Naive thymus-derived CD4-positive, alpha-beta T cell (primary cell): ENCODE measurements at regions of chr6 and their contacts with region 1.

Region 1: GRCh38 chr6:53189554-53189953 is 40.9 kb upstream of the GCM1 start:
- DNase-seq: no peak
- ATAC-seq: no peak
- H3K4me3 ChIP-seq: no peak overlapping the region
- H3K4me3 Mint-ChIP-seq: no peak overlapping the region
- H3K27ac ChIP-seq: no peak overlapping the region
- H3K27ac Mint-ChIP-seq: no peak overlapping the region
- H3K4me1 ChIP-seq: peaks cover 12 to 26% of the 10 kb centered on the region in 2 donors
- H3K4me1 Mint-ChIP-seq: peaks cover 8 to 39% (median 29%) of the 10 kb centered on the region in 7 donors
- H3K27me3 ChIP-seq: no peaks in the 10 kb centered on the region
- H3K27me3 Mint-ChIP-seq: peaks cover 0 to 2% (median 0%) of the 10 kb centered on the region in 5 donors

Region 2: GRCh38 chr6:53244958-53245357 is 55.4 kb after region 1 on chr6:
- CTCF ChIA-PET with region 1: no interaction called
- POLR2A ChIA-PET with region 1: no interaction called
- intact Hi-C with region 1: loop called (anchors 1 to 5 kb)
- DNase-seq: no peak
- ATAC-seq: peak; percentile 81
- H3K4me3 ChIP-seq: no peak overlapping the region
- H3K4me3 Mint-ChIP-seq: no peak overlapping the region
- H3K27ac ChIP-seq: no peak overlapping the region
- H3K27ac Mint-ChIP-seq: peak overlapping the region in 1 of 9 donors; percentile 30
- H3K4me1 ChIP-seq: peaks cover 0 to 17% of the 10 kb centered on the region in 2 donors
- H3K4me1 Mint-ChIP-seq: peaks cover 16 to 44% (median 30%) of the 10 kb centered on the region in 7 donors
- H3K27me3 ChIP-seq: no peaks in the 10 kb centered on the region
- H3K27me3 Mint-ChIP-seq: no peaks in the 10 kb centered on the region

Region 3: GRCh38 chr6:53250176-53251032 is 60.9 kb after region 1 on chr6:
- CTCF ChIA-PET with region 1: no interaction called
- POLR2A ChIA-PET with region 1: no interaction called
- intact Hi-C with region 1: loop called in 1 of 2 experiments (anchors 5 kb)
- DNase-seq: no peak
- ATAC-seq: peak; percentile 34
- H3K4me3 ChIP-seq: no peak overlapping the region
- H3K4me3 Mint-ChIP-seq: no peak overlapping the region
- H3K27ac ChIP-seq: no peak overlapping the region
- H3K27ac Mint-ChIP-seq: no peak overlapping the region
- H3K4me1 ChIP-seq: no peaks in the 10 kb centered on the region
- H3K4me1 Mint-ChIP-seq: peaks cover 0 to 6% (median 0%) of the 10 kb centered on the region in 7 donors
- H3K27me3 ChIP-seq: no peaks in the 10 kb centered on the region
- H3K27me3 Mint-ChIP-seq: no peaks in the 10 kb centered on the region